ENCODE measurements at regions of chr16 and their contacts with region 1.

Region 1: GRCh38 chr16:69424053-69424934 is at the start of gene CYB5B:
- DNase-seq: peak; percentile 92 to 97 (median 94)
- H3K4me3 ChIP-seq: peak within 1 kb of the TSS; percentile 68 to 97 (median 85)
- H3K4me3 Mint-ChIP-seq: peak within 1 kb of the TSS; percentile 98
- H3K27ac ChIP-seq: peak within 1 kb of the TSS; percentile 77 to 87
- H3K27ac Mint-ChIP-seq: peak within 1 kb of the TSS; percentile 92 to 98 (median 96)
- H3K4me1 ChIP-seq: peaks cover 15 to 24% of the 10 kb centered on the region in 2 donors
- H3K4me1 Mint-ChIP-seq: peaks cover 16% of the 10 kb centered on the region
- H3K27me3 ChIP-seq: no peaks in the 10 kb centered on the region
- H3K27me3 Mint-ChIP-seq: peaks cover 1 to 3% (median 2%) of the 10 kb centered on the region in 3 donors
- CTCF ChIP-seq: no peak
- polyA plus RNA-seq, gene CYB5B: 32.3 to 90.4 (median 84.9) TPM

Region 2: DNA sequence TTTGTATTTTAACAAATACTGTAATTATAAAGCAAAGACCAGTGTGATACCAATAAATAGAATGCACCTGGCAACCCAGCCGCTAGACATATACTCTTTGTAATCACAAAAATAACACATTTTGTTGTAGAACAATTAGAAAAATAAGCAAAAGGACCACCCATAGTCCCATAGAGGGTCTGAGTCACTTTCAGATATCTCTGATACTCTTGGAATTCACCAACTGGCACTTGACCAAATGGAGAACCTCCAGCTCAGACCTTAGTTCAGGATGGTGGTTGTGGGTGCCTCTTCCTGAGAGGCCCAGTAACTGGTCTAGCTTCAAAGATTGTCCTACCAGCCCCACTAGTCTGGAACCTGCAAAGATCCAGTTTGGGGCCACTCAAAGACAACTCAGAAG is 37.7 kb before region 1 on chr16:
- intact Hi-C with region 1: loop called in 1 of 2 experiments (anchors 5 kb)
- DNase-seq: no peak
- H3K4me3 ChIP-seq: no peak overlapping the region
- H3K4me3 Mint-ChIP-seq: no peak overlapping the region
- H3K27ac ChIP-seq: no peak overlapping the region
- H3K27ac Mint-ChIP-seq: peak overlapping the region in 1 of 7 donors; percentile 82
- H3K4me1 ChIP-seq: peaks cover 15 to 21% of the 10 kb centered on the region in 2 donors
- H3K4me1 Mint-ChIP-seq: peaks cover 19% of the 10 kb centered on the region
- H3K27me3 ChIP-seq: no peaks in the 10 kb centered on the region
- H3K27me3 Mint-ChIP-seq: peaks cover 0 to 1% (median 1%) of the 10 kb centered on the region in 3 donors
- CTCF ChIP-seq: no peak

Region 3: DNA sequence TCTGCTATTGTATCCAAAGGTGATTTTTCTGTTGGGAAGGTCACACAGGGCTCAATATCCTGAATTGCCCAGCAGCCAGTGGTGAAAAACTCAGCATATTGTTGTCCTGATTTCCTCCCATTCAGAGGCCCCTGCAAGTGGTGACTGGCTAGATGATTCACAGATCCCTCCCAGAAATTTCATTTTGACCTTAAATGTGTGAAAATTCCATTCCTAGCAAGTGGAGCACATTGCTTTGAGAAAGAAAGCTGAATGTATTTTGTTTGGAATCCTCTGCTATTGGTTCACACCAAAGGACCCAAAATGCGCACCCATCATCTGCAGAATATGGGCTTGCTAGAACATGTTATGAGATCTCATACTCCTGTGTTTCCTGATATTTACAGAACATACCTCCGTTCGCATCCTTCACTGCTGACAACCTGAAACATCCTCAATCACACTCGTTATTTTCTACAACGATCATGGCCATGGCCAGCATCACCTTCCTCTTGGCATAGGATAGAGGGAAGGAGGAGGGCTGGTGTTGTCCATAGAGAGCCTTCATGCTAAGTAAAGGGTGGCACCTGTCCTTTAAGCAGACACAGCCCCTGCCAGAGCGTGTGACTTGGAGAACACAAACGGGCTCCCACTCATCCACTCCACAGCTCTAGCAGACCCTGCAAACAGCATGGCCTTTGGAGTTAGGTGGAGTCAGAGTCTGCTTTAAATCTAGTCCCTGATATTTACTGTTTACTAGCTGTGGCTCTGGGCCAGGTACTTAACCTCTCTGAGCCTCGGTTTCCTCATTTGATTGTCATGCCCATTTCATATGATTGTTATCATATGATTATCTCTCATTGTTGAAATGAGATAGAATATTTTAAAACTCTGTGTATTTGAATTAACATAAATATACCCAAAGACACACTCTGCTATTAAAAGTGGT is 111.1 kb after region 1 on chr16:
- intact Hi-C with region 1: no loop called
- DNase-seq: no peak
- H3K4me3 ChIP-seq: no peak overlapping the region
- H3K4me3 Mint-ChIP-seq: no peak overlapping the region
- H3K27ac ChIP-seq: no peak overlapping the region
- H3K27ac Mint-ChIP-seq: no peak overlapping the region
- H3K4me1 ChIP-seq: peaks cover 35 to 42% of the 10 kb centered on the region in 2 donors
- H3K4me1 Mint-ChIP-seq: peaks cover 33% of the 10 kb centered on the region
- H3K27me3 ChIP-seq: peaks cover 6 to 13% of the 10 kb centered on the region in 2 donors
- H3K27me3 Mint-ChIP-seq: peaks cover 18 to 22% (median 20%) of the 10 kb centered on the region in 3 donors
- CTCF ChIP-seq: no peak